ENCODE measurements at regions of chr12 and their contacts with region 1.

Region 1: DNA sequence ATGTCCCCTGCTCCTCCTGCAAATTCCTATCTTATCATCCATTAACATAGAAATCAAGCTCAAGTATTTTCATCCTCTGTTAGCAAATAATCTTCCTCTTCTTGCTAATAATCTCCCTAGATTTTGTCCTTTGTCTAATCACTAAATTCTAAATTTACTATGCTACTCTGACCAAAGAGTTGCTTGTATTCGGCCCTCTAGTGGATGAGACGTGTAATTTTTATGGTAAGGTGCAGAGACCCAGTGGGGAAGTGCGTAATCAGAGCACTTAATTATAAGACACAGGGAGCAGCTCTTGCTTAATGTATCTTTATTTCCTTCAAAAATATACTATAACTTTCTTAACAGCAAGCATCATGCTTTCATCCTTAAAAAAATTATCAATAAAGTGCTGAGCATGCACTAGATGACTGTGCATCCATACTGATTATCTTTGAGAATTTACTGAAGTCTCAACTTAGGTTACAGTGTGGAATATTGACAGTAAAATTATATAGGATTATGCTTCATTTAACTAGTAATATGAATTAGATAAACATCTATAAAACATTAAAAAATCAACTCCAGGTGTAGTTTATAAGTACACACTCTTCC is 212.6 kb downstream of the SLC16A7 start:
- DNase-seq: peak in 4 of 14 experiments; percentile 17 to 52 (median 47)
- ATAC-seq: peak; percentile 70
- H3K4me3 ChIP-seq: no peak overlapping the region
- H3K4me3 Mint-ChIP-seq: no peak overlapping the region
- H3K27ac ChIP-seq: no peak overlapping the region
- H3K27ac Mint-ChIP-seq: no peak overlapping the region
- H3K4me1 ChIP-seq: no peaks in the 10 kb centered on the region
- H3K4me1 Mint-ChIP-seq: no peaks in the 10 kb centered on the region
- H3K27me3 ChIP-seq: no peaks in the 10 kb centered on the region
- H3K27me3 Mint-ChIP-seq: no peaks in the 10 kb centered on the region
- CTCF ChIP-seq: peak; percentile 87

Region 2: GRCh38 chr12:57983146-57983857 is 1825.1 kb before region 1 on chr12:
- CTCF ChIA-PET with region 1: no interaction called
- POLR2A ChIA-PET with region 1: no interaction called
- intact Hi-C with region 1: loop called in 1 of 2 experiments (anchors 10 kb)
- DNase-seq: peak in 5 of 14 experiments; percentile 2 to 43 (median 15)
- ATAC-seq: no peak
- H3K4me3 ChIP-seq: no peak overlapping the region
- H3K4me3 Mint-ChIP-seq: no peak overlapping the region
- H3K27ac ChIP-seq: no peak overlapping the region
- H3K27ac Mint-ChIP-seq: no peak overlapping the region
- H3K4me1 ChIP-seq: no peaks in the 10 kb centered on the region
- H3K4me1 Mint-ChIP-seq: no peaks in the 10 kb centered on the region
- H3K27me3 ChIP-seq: peaks cover 0 to 11% of the 10 kb centered on the region in 2 experiments
- H3K27me3 Mint-ChIP-seq: peaks cover 22% of the 10 kb centered on the region
- CTCF ChIP-seq: no peak

Region 3: DNA sequence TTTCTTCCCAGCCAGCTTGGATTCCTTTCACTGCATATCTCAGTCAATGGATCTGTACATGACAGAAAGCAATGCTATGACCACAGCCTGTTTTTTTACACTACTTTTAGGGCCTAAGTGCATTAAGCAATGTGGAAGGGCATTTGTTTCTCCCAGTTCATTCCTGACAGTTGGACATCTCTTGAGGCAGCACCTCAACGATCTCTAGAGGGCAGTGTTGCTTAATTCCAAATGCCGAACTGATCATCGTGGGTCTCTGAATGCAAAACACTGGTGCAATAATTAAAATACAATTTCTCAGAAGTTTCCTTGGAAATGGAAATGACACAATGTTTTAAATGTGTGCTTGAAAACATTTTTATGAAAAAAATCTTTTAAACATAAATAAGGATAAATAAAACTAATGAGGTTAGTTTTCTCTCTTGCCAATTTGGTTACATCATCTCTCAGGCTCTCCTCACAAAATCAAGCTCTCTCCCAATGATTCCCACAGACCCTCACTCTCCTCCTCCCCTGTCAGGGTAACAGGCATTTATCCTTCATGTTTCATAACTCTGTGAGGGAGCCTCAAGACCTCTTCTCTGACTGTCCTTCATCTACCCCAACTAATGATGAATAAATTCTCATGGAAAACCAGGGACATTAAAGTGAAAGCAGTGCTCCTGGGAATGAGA is 405.0 kb before region 1 on chr12:
- CTCF ChIA-PET with region 1: no interaction called
- POLR2A ChIA-PET with region 1: no interaction called
- intact Hi-C with region 1: loop called (anchors 1 to 2 kb)
- DNase-seq: peak in 8 of 14 experiments; percentile 1 to 70 (median 25)
- ATAC-seq: peak; percentile 49
- H3K4me3 ChIP-seq: no peak overlapping the region
- H3K4me3 Mint-ChIP-seq: no peak overlapping the region
- H3K27ac ChIP-seq: no peak overlapping the region
- H3K27ac Mint-ChIP-seq: no peak overlapping the region
- H3K4me1 ChIP-seq: no peaks in the 10 kb centered on the region
- H3K4me1 Mint-ChIP-seq: no peaks in the 10 kb centered on the region
- H3K27me3 ChIP-seq: no peaks in the 10 kb centered on the region
- H3K27me3 Mint-ChIP-seq: no peaks in the 10 kb centered on the region
- CTCF ChIP-seq: peak; percentile 75

Region 4: GRCh38 chr12:59431266-59431665 is 377.1 kb before region 1 on chr12:
- CTCF ChIA-PET with region 1: no interaction called
- POLR2A ChIA-PET with region 1: no interaction called
- intact Hi-C with region 1: loop called in 1 of 2 experiments (anchors 5 kb)
- DNase-seq: peak in 2 of 14 experiments; percentile 7 to 8
- ATAC-seq: no peak
- H3K4me3 ChIP-seq: no peak overlapping the region
- H3K4me3 Mint-ChIP-seq: no peak overlapping the region
- H3K27ac ChIP-seq: no peak overlapping the region
- H3K27ac Mint-ChIP-seq: no peak overlapping the region
- H3K4me1 ChIP-seq: no peaks in the 10 kb centered on the region
- H3K4me1 Mint-ChIP-seq: no peaks in the 10 kb centered on the region
- H3K27me3 ChIP-seq: no peaks in the 10 kb centered on the region
- H3K27me3 Mint-ChIP-seq: peaks cover 10% of the 10 kb centered on the region
- CTCF ChIP-seq: no peak

Region 5: DNA sequence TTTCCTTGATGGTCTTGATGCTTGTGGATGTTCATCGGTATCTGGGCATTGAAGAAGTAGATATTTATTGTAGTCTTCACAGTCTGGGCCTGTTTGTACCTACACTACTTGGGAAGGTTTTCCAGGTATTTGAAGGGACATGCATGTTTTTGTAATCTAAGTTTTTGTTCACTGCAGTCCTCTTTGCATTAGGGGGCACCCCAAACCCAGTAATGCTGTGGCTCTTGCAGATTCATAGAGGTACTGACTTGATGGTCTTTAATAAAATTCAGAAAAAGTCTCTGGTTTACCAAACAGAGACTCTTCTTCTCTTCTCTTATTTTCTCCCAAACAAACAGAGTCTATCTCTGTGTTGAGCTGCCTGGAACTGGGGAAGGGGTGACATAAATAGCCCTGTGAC is 363.5 kb before region 1 on chr12:
- CTCF ChIA-PET with region 1: interaction called, 4 read pairs
- POLR2A ChIA-PET with region 1: no interaction called
- intact Hi-C with region 1: loop called (anchors 2 to 5 kb)
- DNase-seq: peak in 7 of 14 experiments; percentile 1 to 56 (median 23)
- ATAC-seq: no peak
- H3K4me3 ChIP-seq: no peak overlapping the region
- H3K4me3 Mint-ChIP-seq: no peak overlapping the region
- H3K27ac ChIP-seq: no peak overlapping the region
- H3K27ac Mint-ChIP-seq: no peak overlapping the region
- H3K4me1 ChIP-seq: no peaks in the 10 kb centered on the region
- H3K4me1 Mint-ChIP-seq: no peaks in the 10 kb centered on the region
- H3K27me3 ChIP-seq: no peaks in the 10 kb centered on the region
- H3K27me3 Mint-ChIP-seq: no peaks in the 10 kb centered on the region
- CTCF ChIP-seq: peak; percentile 49

Region 6: DNA sequence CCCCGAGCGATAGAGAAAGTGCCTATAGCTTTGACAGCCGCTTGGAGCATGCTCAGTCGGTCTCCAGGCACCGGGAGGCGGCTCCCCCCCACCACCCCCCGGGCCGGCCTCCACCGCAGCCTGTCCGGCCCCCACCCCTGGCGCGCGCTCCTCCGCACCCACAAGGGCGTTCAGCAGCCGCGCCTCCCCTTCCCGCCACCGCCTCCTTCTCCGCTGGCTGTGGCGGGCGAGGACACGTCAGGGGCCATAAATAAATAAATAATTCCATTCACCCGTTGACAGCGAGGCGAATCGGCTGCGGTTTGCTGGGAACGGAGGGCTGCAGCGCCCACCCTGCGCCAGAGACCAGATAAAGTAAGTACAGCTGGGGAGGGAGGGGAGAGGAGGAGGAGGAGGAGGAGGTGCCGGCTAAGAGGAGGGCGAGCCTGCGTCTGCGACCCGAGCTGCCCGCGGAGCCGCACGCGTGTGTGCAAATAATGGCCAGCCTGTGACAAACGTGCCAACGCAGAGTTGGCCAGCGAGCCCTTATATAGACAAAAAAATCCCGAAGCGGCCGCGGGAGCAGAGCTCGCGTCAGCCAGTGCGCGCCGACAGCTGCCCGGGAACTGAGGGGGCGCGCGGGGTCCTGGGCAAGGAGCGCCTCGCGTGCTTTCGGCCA is 212.4 kb before region 1 on chr12 and contains the start of gene SLC16A7:
- CTCF ChIA-PET with region 1: no interaction called
- POLR2A ChIA-PET with region 1: no interaction called
- intact Hi-C with region 1: loop called in 1 of 2 experiments (anchors 5 kb)
- DNase-seq: peak; percentile 66 to 93 (median 80)
- ATAC-seq: peak; percentile 37
- H3K4me3 ChIP-seq: peak within 1 kb of the TSS; percentile 86
- H3K4me3 Mint-ChIP-seq: peak within 1 kb of the TSS; percentile 96
- H3K27ac ChIP-seq: peak within 1 kb of the TSS; percentile 84 to 91
- H3K27ac Mint-ChIP-seq: peak within 1 kb of the TSS; percentile 99
- H3K4me1 ChIP-seq: peaks cover 11% of the 10 kb centered on the region
- H3K4me1 Mint-ChIP-seq: peaks cover 72% of the 10 kb centered on the region
- H3K27me3 ChIP-seq: no peaks in the 10 kb centered on the region
- H3K27me3 Mint-ChIP-seq: peaks cover 4% of the 10 kb centered on the region
- CTCF ChIP-seq: no peak
- total RNA-seq, gene SLC16A7: 23.7 to 24.6 TPM

Region 7: GRCh38 chr12:59787610-59788009 is 20.8 kb before region 1 on chr12:
- CTCF ChIA-PET with region 1: no interaction called
- POLR2A ChIA-PET with region 1: no interaction called
- intact Hi-C with region 1: no loop called
- DNase-seq: no peak
- ATAC-seq: no peak
- H3K4me3 ChIP-seq: no peak overlapping the region
- H3K4me3 Mint-ChIP-seq: no peak overlapping the region
- H3K27ac ChIP-seq: no peak overlapping the region
- H3K27ac Mint-ChIP-seq: no peak overlapping the region
- H3K4me1 ChIP-seq: no peaks in the 10 kb centered on the region
- H3K4me1 Mint-ChIP-seq: no peaks in the 10 kb centered on the region
- H3K27me3 ChIP-seq: no peaks in the 10 kb centered on the region
- H3K27me3 Mint-ChIP-seq: no peaks in the 10 kb centered on the region
- CTCF ChIP-seq: no peak